Aorta (tissue), 5 donors: ENCODE measurements at regions of chr22 and their contacts with region 1.

Region 1: DNA sequence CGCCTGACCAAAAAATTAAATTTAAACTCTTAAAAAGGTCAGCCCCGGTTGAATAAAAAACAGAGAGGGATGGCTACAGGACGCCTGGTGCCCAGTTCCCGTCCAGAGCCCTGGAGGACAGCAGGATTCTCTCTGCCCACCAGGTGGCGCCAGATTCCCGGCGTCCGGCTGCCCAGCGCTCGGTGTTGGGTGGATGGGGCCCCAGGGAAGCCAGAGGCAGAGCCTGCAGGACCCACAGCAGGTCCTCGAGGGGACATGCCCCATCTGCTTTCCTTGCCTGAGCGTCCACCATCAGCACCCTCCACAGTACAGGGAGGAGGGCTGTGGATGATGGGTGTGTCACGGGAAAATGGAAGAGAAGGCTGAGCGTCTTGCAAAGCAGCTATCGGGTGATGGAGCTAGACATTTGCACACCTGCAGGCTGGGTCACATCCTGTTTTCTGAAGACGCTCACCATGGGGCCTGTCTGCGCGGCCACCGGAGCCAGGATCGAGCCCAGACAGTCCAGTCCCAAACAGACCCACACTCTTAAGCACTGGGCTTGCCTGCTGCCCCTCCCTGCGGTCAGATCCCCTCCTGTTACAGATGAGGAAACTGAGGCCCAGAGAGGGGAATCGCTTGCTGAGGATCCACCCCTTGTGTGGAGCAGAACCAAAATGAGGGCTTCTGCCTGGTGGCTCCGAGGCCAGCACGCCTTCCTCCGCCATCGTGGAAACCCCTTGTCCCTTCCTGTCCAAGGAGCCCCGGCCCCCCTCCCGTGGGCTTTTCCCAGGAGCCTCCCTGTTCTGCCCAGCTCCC is 18.5 kb upstream of the CBX7 start:
- DNase-seq: peak; percentile 89 to 96
- ATAC-seq: peak; percentile 88
- H3K4me3 ChIP-seq: no peak overlapping the region
- H3K27ac ChIP-seq: no peak overlapping the region
- H3K4me1 ChIP-seq: peaks cover 0 to 7% of the 10 kb centered on the region in 2 donors
- H3K27me3 ChIP-seq: no peaks in the 10 kb centered on the region

Region 2: GRCh38 chr22:39309881-39310714 is 139.1 kb after region 1 on chr22:
- intact Hi-C with region 1: loop called in 1 of 2 experiments (anchors 2 kb)
- DNase-seq: peak in 1 of 2 donors; percentile 76
- ATAC-seq: no peak
- H3K4me3 ChIP-seq: no peak overlapping the region
- H3K27ac ChIP-seq: peak overlapping the region in 1 of 2 donors; percentile 5
- H3K4me1 ChIP-seq: no peaks in the 10 kb centered on the region
- H3K27me3 ChIP-seq: no peaks in the 10 kb centered on the region

Region 3: GRCh38 chr22:39319270-39320022 is 148.4 kb after region 1 on chr22 and contains the start of gene RPL3:
- intact Hi-C with region 1: loop called in 1 of 2 experiments (anchors 1 kb)
- DNase-seq: peak; percentile 97 to 99
- ATAC-seq: peak; percentile 97
- H3K4me3 ChIP-seq: peak within 1 kb of the TSS; percentile 50 to 89
- H3K27ac ChIP-seq: peak within 1 kb of the TSS; percentile 57 to 94
- H3K4me1 ChIP-seq: no peaks in the 10 kb centered on the region
- H3K27me3 ChIP-seq: no peaks in the 10 kb centered on the region
- total RNA-seq, gene RPL3: 1,469 to 1,615 TPM